ENCODE measurements at regions of chr7 and their contacts with region 1.

Region 1: DNA sequence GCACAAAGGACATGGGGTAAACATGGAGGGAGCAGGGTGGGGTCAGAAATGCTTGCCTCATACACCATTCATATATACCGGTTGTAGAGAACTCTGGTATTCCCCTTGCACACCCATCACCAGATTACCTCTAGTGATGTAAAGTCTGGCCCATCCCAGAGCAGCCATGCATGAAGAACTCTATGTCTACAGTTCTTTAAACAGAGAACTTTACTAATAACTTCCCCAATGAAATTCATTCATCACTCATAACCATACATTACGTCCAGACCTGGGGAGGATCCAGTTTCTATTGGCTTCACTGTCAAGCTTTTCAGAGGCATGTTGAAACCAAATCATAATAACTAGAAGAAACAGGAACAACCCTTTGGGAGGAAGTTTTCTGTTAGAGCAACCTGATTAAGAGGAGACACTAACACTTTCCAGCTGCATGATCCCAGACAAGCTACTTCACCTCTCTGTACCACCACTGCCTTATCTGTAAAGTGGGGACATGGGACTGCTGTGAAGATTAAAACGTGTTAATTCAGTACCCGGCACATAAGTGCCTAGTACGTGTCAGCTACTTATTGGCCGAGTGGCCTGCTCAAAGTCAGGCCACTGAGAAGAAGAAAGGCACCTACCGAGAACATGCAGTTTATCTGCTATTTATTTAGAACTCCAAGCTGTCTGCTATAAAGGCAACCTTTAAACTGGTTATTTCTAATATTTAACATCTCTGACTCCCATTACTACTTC is 59.7 kb downstream of the IGF2BP3 start:
- DNase-seq: no peak

Region 2: DNA sequence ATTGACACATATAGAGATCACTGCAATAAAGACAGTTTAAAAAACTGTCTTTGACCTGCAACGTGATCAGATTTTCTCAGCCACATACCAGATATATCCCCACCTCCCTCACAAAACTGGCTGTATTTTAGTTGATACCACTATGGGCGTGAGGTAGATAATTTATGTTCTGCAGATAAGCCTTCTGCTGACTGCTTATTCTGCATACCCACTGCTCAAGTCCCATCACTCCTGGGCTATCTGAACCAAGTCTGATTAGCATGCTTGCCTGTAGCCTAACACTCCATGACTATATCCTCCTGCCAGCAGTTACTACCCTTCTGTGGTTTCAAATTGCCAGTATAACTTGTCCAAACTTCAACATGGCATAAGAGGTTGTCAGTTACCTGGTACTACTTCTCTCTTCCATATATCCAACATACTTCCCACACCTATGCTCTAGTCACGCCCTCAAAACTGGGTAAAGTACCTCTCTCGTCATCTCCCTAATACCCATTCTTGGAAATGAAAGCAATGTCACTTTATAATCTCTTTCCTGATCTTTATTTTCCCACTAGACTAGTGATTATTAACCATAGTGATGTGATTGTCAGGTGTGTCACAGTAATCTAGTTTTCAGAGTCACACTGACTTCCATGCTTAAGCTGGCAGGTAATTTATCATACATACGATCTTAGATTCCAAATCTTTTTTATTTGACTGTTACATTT is 40.8 kb before region 1 on chr7:
- intact Hi-C with region 1: no loop called
- DNase-seq: no peak

Region 3: GRCh38 chr7:23888958-23889357 is 478.3 kb after region 1 on chr7:
- intact Hi-C with region 1: loop called in 1 of 2 experiments (anchors 10 kb)
- DNase-seq: no peak